ENCODE measurements at regions of chr14 and their contacts with region 1.

Region 1: DNA sequence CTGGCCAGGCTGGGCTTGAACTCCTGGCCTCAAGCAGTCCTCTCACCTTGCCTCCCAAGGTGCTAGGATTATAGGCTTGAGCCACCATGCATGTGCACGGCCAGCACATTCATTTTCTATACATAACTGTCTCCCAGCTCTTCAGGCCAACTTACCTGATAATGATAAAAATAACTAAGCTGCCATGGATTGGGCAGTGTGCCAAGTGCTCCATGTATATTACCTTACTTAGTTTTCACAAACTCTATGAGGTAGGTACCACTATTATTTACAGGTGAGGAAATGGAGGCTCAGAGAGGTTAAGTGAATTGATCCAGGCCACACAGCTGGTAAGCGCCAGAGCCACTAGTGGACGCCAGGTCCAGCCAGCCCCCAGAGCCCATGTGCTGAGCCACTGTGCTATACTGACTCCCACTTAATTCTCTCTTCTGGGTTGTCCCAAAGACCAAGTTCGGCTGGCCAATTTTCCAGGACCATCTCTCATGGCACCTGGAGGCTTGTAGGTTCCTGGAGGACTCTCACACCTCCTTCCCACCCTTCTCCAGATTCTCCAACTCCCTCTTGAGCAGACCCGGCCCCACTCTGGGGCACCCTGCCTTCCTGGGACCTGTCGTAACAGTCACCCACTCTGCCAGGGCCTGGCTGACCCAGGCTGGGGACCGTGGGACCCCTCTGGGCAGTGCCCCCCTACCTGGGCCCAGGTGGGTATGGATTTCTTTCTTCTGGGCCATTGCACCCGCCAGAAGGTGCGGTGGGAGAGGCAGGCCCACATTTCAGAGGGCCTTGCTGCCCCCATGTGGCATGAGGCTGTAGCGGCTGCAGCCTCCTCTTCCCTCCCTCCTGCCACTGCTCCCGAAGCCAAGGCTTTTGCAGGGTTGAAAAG is 30.2 kb upstream of the CIPC start:
- DNase-seq: peak; percentile 66 to 85 (median 74)
- ATAC-seq: peak; percentile 60 to 84 (median 78)
- H3K4me3 ChIP-seq: no peak overlapping the region
- H3K27ac ChIP-seq: peak overlapping the region in 5 of 12 donors; percentile 8 to 72 (median 39)
- H3K4me1 ChIP-seq: peaks cover 3 to 49% (median 28%) of the 10 kb centered on the region in 12 donors
- H3K27me3 ChIP-seq: no peaks in the 10 kb centered on the region
- CTCF ChIP-seq: peak; percentile 72 to 95 (median 84)
- POLR2A ChIP-seq: no peak

Region 2: GRCh38 chr14:76910371-76910890 is 157.4 kb before region 1 on chr14:
- intact Hi-C with region 1: loop called in 9 of 10 experiments (anchors 1 to 5 kb)
- DNase-seq: no peak
- ATAC-seq: no peak
- H3K4me3 ChIP-seq: no peak overlapping the region
- H3K27ac ChIP-seq: no peak overlapping the region
- H3K4me1 ChIP-seq: peaks cover 4 to 29% (median 11%) of the 10 kb centered on the region in 12 donors
- H3K27me3 ChIP-seq: no peaks in the 10 kb centered on the region
- CTCF ChIP-seq: no peak
- POLR2A ChIP-seq: no peak

Region 3: GRCh38 chr14:76977793-76978720 is 89.8 kb before region 1 on chr14:
- intact Hi-C with region 1: no loop called
- DNase-seq: peak; percentile 36 to 82 (median 70)
- ATAC-seq: peak; percentile 26 to 87 (median 82)
- H3K4me3 ChIP-seq: no peak overlapping the region
- H3K27ac ChIP-seq: peak overlapping the region in 3 of 12 donors; percentile 39 to 81 (median 42)
- H3K4me1 ChIP-seq: peaks cover 0 to 16% (median 0%) of the 10 kb centered on the region in 12 donors
- H3K27me3 ChIP-seq: no peaks in the 10 kb centered on the region
- CTCF ChIP-seq: no peak
- POLR2A ChIP-seq: no peak

Region 4: DNA sequence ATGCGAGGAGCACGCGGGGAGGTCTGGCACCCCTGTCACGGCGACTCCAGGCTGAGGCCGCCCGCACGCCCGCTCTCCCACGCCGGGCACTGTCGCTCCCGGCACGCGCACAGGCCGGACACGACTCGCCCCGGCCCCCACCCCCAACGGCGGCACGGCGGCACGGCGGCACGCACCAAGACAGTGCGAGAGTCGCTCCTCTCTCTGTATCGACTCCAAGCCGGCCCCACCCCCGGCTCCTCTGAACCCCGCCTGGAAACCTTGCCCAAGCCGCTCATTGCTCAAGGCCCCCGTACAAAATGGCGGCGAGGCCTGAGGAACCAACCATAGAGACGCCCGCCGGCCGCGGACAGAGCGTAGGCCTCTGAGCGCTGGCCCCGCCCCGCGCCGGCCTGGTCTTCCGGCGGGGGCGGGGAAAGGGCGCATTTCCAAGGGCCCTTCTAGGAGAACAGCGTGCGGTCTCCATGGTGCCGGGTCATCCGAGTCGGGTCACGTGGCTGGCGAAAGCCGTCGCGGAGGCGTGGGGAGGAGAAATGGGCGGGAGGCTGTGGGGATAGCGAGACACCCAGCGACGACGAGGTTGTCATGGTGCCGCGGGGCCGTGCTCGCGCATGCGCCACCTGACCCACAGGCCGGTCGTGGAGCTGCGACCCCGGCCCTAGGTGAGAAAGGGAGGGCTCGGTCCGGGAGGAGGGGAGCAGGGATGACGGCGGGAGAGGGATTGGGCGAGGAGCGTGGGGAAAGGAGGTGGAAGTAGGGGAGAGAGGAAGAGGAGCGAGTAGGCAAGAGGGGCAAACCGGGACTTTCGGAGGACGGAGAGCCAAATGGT is 30.0 kb after region 1 on chr14 and contains the start of gene CIPC:
- intact Hi-C with region 1: loop called in 4 of 10 experiments (anchors 1 to 2 kb)
- DNase-seq: peak; percentile 100
- ATAC-seq: peak; percentile 89 to 96 (median 92)
- H3K4me3 ChIP-seq: peak within 1 kb of the TSS; percentile 64 to 92 (median 74)
- H3K27ac ChIP-seq: peak within 1 kb of the TSS; percentile 96 to 99 (median 98)
- H3K4me1 ChIP-seq: peaks cover 3 to 64% (median 45%) of the 10 kb centered on the region in 12 donors
- H3K27me3 ChIP-seq: no peaks in the 10 kb centered on the region
- CTCF ChIP-seq: no peak
- POLR2A ChIP-seq: peak; percentile 28 to 67
- total RNA-seq, gene CIPC: 44.5 to 85.9 (median 66.7) TPM

Region 5: GRCh38 chr14:77113644-77114043 is 45.8 kb after region 1 on chr14:
- intact Hi-C with region 1: no loop called
- DNase-seq: peak; percentile 67 to 86 (median 73)
- ATAC-seq: peak; percentile 92 to 96 (median 95)
- H3K4me3 ChIP-seq: no peak overlapping the region
- H3K27ac ChIP-seq: peak overlapping the region in 10 of 12 donors; percentile 19 to 73 (median 60)
- H3K4me1 ChIP-seq: peaks cover 0 to 54% (median 18%) of the 10 kb centered on the region in 12 donors
- H3K27me3 ChIP-seq: no peaks in the 10 kb centered on the region
- CTCF ChIP-seq: peak in 10 of 12 donors; percentile 14 to 51 (median 28)
- POLR2A ChIP-seq: no peak